GM13977 (cell line): ENCODE measurements at regions of chr20 and their contacts with region 1.

Region 1: GRCh38 chr20:22586645-22587310 is 2.4 kb upstream of the FOXA2 start:
- DNase-seq: peak; percentile 65
- CTCF ChIP-seq: peak; percentile 65

Region 2: DNA sequence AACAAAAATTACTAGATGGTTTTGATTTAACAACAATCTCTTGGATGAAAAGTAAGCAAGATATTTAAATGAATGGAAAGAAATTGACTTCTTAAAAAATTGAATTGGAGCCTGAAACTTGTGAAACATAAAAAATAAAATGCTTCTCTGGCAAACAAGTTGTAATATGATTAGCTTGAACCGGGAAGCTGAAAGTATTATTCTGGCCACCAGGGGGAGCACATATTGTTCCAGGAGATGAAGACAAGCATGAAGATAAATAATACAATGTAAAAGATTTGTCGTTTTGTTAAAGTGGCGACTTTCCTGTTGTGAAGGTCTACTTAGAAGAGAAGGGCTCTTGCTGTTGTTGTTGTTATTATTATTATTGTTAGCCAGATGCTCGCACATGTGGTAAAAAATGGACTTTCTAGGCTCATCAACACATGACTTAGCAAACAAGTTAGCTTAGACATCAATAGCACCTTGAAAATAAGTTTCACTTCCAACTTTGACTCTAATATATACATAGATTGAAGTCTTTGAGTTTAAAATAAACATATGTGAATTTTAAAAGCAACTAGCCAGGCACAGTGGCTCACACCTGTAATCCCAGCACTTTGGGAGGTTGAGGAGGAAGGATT is 867.1 kb before region 1 on chr20:
- in situ Hi-C with region 1: loop called (anchors 25 kb)
- DNase-seq: peak; percentile 72
- CTCF ChIP-seq: peak; percentile 78

Region 3: GRCh38 chr20:22333885-22334545 is 252.8 kb before region 1 on chr20:
- in situ Hi-C with region 1: loop called (anchors 25 kb)
- DNase-seq: peak; percentile 69
- CTCF ChIP-seq: peak; percentile 79

Region 4: DNA sequence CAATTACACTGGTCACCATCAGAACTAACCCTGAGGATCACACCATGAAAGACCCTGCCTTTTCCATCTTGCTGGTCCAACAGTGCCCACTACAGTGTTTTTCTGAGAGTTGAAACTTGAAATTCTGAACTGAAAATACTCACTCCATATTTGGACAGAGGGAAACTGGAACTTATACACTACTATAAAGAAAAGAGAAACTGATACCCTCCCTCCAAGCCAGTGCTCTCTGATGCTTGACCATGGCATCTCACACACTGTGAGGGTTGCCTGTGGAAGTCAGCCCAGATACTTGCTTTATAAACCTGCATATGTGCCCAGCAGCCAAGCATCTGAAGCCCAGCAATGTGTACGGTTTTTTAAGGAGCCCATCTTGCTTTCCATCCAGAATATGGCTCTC is 111.1 kb before region 1 on chr20:
- in situ Hi-C with region 1: no loop called
- DNase-seq: no peak
- CTCF ChIP-seq: no peak

Region 5: GRCh38 chr20:22499515-22500166 is 87.1 kb before region 1 on chr20:
- in situ Hi-C with region 1: no loop called
- DNase-seq: no peak
- CTCF ChIP-seq: no peak

Region 6: GRCh38 chr20:22684072-22684762 is 97.4 kb after region 1 on chr20:
- in situ Hi-C with region 1: no loop called
- DNase-seq: peak; percentile 67
- CTCF ChIP-seq: peak; percentile 83